ENCODE measurements at regions of chr4 and their contacts with region 1.

Region 1: GRCh38 chr4:37452952-37453280 is 208.4 kb downstream of the NWD2 start:
- DNase-seq: no peak
- ATAC-seq: peak; percentile 60 to 80

Region 2: GRCh38 chr4:37561803-37562207 is 108.9 kb after region 1 on chr4:
- intact Hi-C with region 1: loop called (anchors 5 to 10 kb)
- DNase-seq: no peak
- ATAC-seq: no peak

Region 3: DNA sequence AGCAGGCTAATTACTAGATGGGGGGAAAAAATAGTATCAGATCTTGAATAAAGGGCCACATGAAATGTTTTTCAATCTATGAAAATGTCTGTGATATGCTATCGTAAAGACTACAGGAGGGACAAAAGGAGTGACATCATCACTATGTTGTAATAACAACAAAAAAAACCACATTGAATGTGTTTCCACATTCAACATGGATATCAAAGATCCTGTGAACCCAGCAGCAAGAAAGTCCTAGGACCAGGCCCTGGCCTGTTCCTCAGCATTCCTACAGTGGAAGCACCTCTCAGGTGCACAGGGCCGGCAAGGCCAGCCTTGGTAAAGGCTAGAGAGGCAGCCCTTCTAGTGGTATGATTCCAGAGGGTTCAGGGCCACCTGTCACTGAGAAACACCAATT is 114.9 kb after region 1 on chr4:
- intact Hi-C with region 1: loop called (anchors 5 to 10 kb)
- DNase-seq: no peak
- ATAC-seq: no peak

Region 4: DNA sequence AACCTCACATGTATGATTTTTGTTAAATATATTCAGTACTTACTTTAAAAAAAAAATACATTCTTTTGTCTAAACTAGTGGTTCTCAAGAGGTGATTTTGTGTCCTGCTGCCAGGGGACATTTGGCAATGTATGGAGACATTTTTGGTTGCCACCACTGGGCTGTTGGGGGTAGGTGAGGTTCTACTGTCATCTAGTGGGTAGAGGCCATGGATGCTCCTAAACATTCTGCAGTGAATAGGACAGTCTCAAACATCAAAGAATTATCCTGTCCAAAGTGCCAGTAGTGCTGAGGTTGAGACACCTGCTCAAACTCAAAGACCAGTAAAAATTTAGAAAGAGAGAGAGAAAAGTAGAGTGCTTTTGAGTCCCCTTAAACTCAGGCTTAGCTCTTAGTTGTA is 340.6 kb after region 1 on chr4:
- intact Hi-C with region 1: loop called in 1 of 2 experiments (anchors 10 kb)
- DNase-seq: no peak
- ATAC-seq: peak; percentile 78 to 81

Measured in left cardiac atrium (tissue), 4 donors.